CD8-positive, alpha-beta T cell (primary cell): ENCODE measurements at regions of chr16 and their contacts with region 1.

Region 1: GRCh38 chr16:4358831-4359561 is 7.9 kb upstream of the PAM16 start:
- DNase-seq: peak; percentile 49 to 83 (median 70)
- ATAC-seq: peak; percentile 72
- H3K4me3 ChIP-seq: no peak overlapping the region
- H3K4me3 Mint-ChIP-seq: no peak overlapping the region
- H3K27ac ChIP-seq: peak overlapping the region in 1 of 2 experiments; percentile 25
- H3K27ac Mint-ChIP-seq: no peak overlapping the region
- H3K4me1 ChIP-seq: no peaks in the 10 kb centered on the region
- H3K4me1 Mint-ChIP-seq: no peaks in the 10 kb centered on the region
- H3K27me3 ChIP-seq: no peaks in the 10 kb centered on the region
- H3K27me3 Mint-ChIP-seq: no peaks in the 10 kb centered on the region
- CTCF ChIP-seq: peak; percentile 96

Region 2: GRCh38 chr16:4371357-4372000 is 12.5 kb after region 1 on chr16 and contains the start of gene VASN:
- CTCF ChIA-PET with region 1: interaction called, 14 read pairs
- POLR2A ChIA-PET with region 1: no interaction called
- intact Hi-C with region 1: no loop called
- DNase-seq: peak; percentile 53 to 84 (median 75)
- ATAC-seq: peak; percentile 74
- H3K4me3 ChIP-seq: peak within 1 kb of the TSS; percentile 28 to 54
- H3K4me3 Mint-ChIP-seq: peak within 1 kb of the TSS; percentile 84
- H3K27ac ChIP-seq: no peak within 1 kb of the TSS
- H3K27ac Mint-ChIP-seq: peak within 1 kb of the TSS; percentile 32
- H3K4me1 ChIP-seq: peaks cover 19% of the 10 kb centered on the region
- H3K4me1 Mint-ChIP-seq: peaks cover 19% of the 10 kb centered on the region
- H3K27me3 ChIP-seq: no peaks in the 10 kb centered on the region
- H3K27me3 Mint-ChIP-seq: no peaks in the 10 kb centered on the region
- CTCF ChIP-seq: no peak
- total RNA-seq, gene VASN: 0.57 to 0.83 TPM

Region 3: DNA sequence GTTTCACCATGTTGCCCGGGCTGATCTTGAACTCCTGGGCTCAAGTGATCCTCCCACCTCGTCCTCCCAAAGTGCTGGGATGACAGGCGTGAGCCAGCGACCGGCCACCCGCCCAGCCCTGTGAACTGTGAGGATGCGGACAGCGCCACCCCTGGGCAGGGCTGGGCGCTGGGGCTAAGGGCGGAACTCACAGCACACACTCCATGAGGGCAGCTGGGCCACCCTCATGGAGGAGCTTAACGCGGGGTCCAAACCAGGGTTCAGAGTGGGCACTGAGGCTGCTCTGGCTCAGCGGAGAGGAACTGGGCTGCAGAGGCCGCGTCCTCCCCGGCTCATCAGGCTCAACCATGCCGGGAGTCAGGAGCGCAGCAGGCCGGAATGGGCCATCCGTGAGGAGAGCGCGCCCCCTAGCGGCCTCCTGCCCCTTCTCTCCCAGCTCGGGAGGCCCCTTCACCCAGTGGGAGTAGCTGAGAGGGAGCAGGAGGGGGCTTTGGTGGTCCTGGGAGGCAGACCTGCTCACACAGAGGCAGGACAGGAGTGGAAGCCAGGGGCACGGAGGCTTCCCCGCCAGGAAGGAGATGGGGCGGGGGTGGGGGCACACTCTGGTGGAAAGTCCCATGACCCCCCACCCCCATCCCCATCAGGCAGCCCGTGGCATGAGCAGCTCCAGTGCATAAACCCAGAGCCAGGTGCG is 43.6 kb after region 1 on chr16:
- CTCF ChIA-PET with region 1: interaction called, 14 read pairs
- POLR2A ChIA-PET with region 1: no interaction called
- intact Hi-C with region 1: loop called in 1 of 2 experiments (anchors 1 kb)
- DNase-seq: peak in 8 of 9 experiments; percentile 50 to 83 (median 68)
- ATAC-seq: peak; percentile 37
- H3K4me3 ChIP-seq: no peak overlapping the region
- H3K4me3 Mint-ChIP-seq: no peak overlapping the region
- H3K27ac ChIP-seq: no peak overlapping the region
- H3K27ac Mint-ChIP-seq: no peak overlapping the region
- H3K4me1 ChIP-seq: no peaks in the 10 kb centered on the region
- H3K4me1 Mint-ChIP-seq: peaks cover 19% of the 10 kb centered on the region
- H3K27me3 ChIP-seq: no peaks in the 10 kb centered on the region
- H3K27me3 Mint-ChIP-seq: no peaks in the 10 kb centered on the region
- CTCF ChIP-seq: peak; percentile 71

Region 4: DNA sequence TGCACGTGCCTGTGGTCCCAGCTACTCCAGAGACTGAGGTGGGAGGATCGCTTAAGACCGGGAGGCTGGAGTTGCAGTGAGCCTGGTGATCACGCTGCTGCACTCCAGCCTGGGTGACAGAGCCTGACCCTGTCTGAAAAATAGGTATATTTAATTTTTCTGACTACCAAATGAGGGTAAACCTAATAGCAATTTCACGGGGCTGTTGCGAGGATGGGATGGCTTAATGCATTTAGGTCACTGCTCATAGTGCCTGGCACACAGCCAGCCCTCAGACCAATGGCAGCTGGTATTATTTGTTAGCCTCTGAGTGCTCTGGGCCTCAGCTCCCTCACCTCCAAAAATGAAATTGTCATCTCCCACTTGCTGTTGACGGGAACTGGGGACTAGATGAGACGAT is 185.5 kb after region 1 on chr16:
- CTCF ChIA-PET with region 1: interaction called, 5 read pairs
- POLR2A ChIA-PET with region 1: no interaction called
- intact Hi-C with region 1: loop called in 1 of 2 experiments (anchors 2 kb)
- DNase-seq: no peak
- ATAC-seq: no peak
- H3K4me3 ChIP-seq: no peak overlapping the region
- H3K4me3 Mint-ChIP-seq: no peak overlapping the region
- H3K27ac ChIP-seq: no peak overlapping the region
- H3K27ac Mint-ChIP-seq: no peak overlapping the region
- H3K4me1 ChIP-seq: peaks cover 9% of the 10 kb centered on the region
- H3K4me1 Mint-ChIP-seq: peaks cover 3% of the 10 kb centered on the region
- H3K27me3 ChIP-seq: no peaks in the 10 kb centered on the region
- H3K27me3 Mint-ChIP-seq: no peaks in the 10 kb centered on the region
- CTCF ChIP-seq: no peak

Region 5: GRCh38 chr16:4580245-4580644 is 221.2 kb after region 1 on chr16:
- CTCF ChIA-PET with region 1: no interaction called
- POLR2A ChIA-PET with region 1: no interaction called
- intact Hi-C with region 1: loop called in 1 of 2 experiments (anchors 1 kb)
- DNase-seq: no peak
- ATAC-seq: no peak
- H3K4me3 ChIP-seq: no peak overlapping the region
- H3K4me3 Mint-ChIP-seq: no peak overlapping the region
- H3K27ac ChIP-seq: no peak overlapping the region
- H3K27ac Mint-ChIP-seq: no peak overlapping the region
- H3K4me1 ChIP-seq: peaks cover 1% of the 10 kb centered on the region
- H3K4me1 Mint-ChIP-seq: no peaks in the 10 kb centered on the region
- H3K27me3 ChIP-seq: no peaks in the 10 kb centered on the region
- H3K27me3 Mint-ChIP-seq: no peaks in the 10 kb centered on the region
- CTCF ChIP-seq: no peak

Region 6: DNA sequence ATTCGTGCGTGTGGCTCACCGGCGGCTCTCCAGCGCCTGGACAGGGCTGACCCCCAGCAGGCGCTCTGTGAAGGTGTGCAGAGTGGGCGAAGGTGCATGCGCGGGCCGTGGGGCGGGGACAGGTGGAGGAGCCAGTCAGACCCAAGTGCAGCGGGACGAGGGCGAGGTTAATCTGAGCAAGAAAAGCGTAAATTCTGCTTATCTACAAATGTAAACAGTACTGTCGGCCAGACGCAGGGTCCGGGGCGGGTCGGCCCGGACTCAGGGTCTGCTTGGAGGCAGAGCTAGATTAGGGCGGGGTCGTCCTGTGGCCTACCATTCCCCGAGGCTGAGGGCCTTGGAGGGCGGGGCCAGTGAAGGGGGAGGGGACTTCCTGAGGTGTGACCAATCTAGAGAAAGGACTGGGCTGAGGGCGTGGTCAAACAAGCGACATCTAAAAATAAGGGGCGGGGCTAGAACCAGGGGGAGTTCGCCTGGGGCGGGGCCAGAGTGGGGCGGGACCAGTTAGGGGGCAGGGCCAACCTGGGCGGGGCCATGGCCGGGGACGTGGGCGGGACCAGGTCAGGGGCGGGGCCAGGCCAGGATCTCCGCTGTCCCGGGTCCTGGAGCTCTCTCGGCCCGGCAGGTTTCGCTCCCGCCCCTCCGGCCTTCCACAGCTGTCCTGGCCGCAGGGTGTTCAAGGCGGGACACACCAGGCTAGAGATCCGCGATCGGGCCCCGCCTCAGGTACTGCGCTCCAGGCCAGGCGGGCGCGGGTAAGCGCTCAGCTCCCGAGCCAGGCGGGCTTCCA is 598.9 kb after region 1 on chr16 and contains the start of gene SEC14L5:
- CTCF ChIA-PET with region 1: interaction called, 4 read pairs
- POLR2A ChIA-PET with region 1: no interaction called
- intact Hi-C with region 1: loop called in 1 of 2 experiments (anchors 1 kb)
- DNase-seq: peak; percentile 72 to 92 (median 87)
- ATAC-seq: peak; percentile 98
- H3K4me3 ChIP-seq: peak within 1 kb of the TSS; percentile 40 to 70
- H3K4me3 Mint-ChIP-seq: peak within 1 kb of the TSS; percentile 82
- H3K27ac ChIP-seq: no peak within 1 kb of the TSS
- H3K27ac Mint-ChIP-seq: no peak within 1 kb of the TSS
- H3K4me1 ChIP-seq: peaks cover 15% of the 10 kb centered on the region
- H3K4me1 Mint-ChIP-seq: peaks cover 20% of the 10 kb centered on the region
- H3K27me3 ChIP-seq: peaks cover 6 to 22% of the 10 kb centered on the region in 2 experiments
- H3K27me3 Mint-ChIP-seq: peaks cover 55% of the 10 kb centered on the region
- CTCF ChIP-seq: no peak
- total RNA-seq, gene SEC14L5: not detected